CD4-positive, alpha-beta memory T cell (primary cell): ENCODE measurements at regions of chr5 and their contacts with region 1.

Region 1: DNA sequence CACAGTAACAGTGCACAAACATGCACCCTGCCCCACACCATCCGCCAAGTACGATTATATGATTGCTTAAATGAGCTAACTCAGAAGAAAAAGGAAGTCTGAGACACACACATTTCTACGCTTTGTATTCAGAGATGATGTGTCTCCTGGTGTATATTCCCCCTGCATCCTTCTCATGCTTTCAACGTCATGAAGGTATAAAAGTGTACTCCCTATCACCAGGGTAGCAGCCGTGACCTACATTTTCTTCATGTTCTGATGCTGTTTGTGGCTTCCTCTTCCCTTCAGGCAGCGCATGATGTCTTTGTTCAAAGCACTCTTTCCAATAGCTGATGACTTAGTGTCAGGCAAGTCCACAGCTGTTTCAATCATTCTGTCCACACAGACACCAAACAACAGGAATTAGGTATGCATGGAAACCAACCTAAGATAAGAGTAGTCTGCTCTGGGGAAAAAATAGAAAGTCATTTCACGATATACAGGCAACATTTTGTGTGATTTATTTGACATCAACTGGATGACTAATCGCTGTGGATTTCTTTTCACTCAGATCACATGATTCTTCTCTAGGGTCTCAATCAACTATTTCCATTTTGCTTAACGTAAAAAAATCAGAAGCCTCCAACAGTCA is 269.4 kb upstream of the PTGER4 start:
- DNase-seq: peak; percentile 88 to 97 (median 97)
- H3K4me3 ChIP-seq: peak overlapping the region in 1 of 2 donors; percentile 50
- H3K4me3 Mint-ChIP-seq: peak overlapping the region; percentile 65 to 89 (median 80)
- H3K27ac ChIP-seq: peak overlapping the region; percentile 95
- H3K27ac Mint-ChIP-seq: peak overlapping the region; percentile 86 to 100 (median 99)
- H3K4me1 ChIP-seq: peaks cover 65% of the 10 kb centered on the region
- H3K4me1 Mint-ChIP-seq: peaks cover 38 to 72% (median 52%) of the 10 kb centered on the region in 4 donors
- H3K27me3 ChIP-seq: no peaks in the 10 kb centered on the region
- H3K27me3 Mint-ChIP-seq: no peaks in the 10 kb centered on the region

Region 2: GRCh38 chr5:39765366-39765765 is 645.0 kb before region 1 on chr5:
- CTCF ChIA-PET with region 1: no interaction called
- POLR2A ChIA-PET with region 1: no interaction called
- intact Hi-C with region 1: no loop called
- DNase-seq: no peak
- H3K4me3 ChIP-seq: no peak overlapping the region
- H3K4me3 Mint-ChIP-seq: no peak overlapping the region
- H3K27ac ChIP-seq: no peak overlapping the region
- H3K27ac Mint-ChIP-seq: no peak overlapping the region
- H3K4me1 ChIP-seq: no peaks in the 10 kb centered on the region
- H3K4me1 Mint-ChIP-seq: no peaks in the 10 kb centered on the region
- H3K27me3 ChIP-seq: peaks cover 3% of the 10 kb centered on the region
- H3K27me3 Mint-ChIP-seq: peaks cover 6 to 20% of the 10 kb centered on the region in 2 donors

Region 3: DNA sequence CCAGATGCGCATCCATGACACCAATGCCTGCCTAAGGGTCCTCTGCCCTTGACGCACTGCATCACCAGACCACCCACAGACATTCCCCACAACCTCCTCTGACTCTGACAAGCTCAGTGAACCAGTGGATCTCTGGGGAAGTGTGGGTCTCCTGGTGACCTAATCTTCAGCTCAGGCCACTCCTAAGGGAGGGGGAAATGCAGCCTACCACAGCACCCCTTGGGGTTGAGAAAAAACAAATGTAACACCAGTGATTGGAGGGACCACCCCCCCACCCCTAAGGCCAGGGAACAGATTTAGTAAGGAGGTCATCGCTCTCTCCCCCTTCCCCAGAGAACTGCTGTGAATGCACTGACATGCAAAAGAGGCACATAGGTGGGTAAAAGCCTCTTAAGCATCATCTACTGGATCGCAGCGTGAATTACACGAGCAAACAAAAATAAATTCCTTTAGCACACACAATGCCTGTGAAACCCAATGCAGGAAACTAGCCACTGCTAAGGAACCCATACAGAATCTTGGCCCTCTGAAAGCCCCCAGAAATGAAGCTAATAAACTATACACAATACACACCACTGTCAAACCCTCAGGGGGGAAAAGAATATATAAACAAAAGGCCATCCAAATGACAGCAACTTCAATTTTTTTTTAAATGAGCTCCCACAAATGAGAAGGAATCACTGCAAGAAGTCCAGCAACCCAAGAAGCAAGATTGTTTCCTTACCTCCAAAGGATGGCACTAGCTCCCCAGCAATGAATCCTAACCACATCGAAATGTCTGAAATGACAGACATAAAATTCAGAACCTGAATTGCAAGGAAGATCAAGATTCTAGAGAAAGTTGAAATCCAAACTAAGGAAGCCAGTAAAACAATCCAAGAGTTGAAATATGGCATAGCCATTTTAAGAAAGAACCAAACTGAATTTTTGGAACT is 244.3 kb before region 1 on chr5:
- CTCF ChIA-PET with region 1: no interaction called
- POLR2A ChIA-PET with region 1: no interaction called
- intact Hi-C with region 1: no loop called
- DNase-seq: peak in 4 of 5 donors; percentile 13 to 33 (median 16)
- H3K4me3 ChIP-seq: no peak overlapping the region
- H3K4me3 Mint-ChIP-seq: no peak overlapping the region
- H3K27ac ChIP-seq: no peak overlapping the region
- H3K27ac Mint-ChIP-seq: no peak overlapping the region
- H3K4me1 ChIP-seq: no peaks in the 10 kb centered on the region
- H3K4me1 Mint-ChIP-seq: peaks cover 0 to 1% (median 0%) of the 10 kb centered on the region in 4 donors
- H3K27me3 ChIP-seq: no peaks in the 10 kb centered on the region
- H3K27me3 Mint-ChIP-seq: no peaks in the 10 kb centered on the region

Region 4: GRCh38 chr5:40386289-40386688 is 24.1 kb before region 1 on chr5:
- CTCF ChIA-PET with region 1: interaction called, 22 read pairs
- POLR2A ChIA-PET with region 1: interaction called, 121 read pairs
- intact Hi-C with region 1: loop called (anchors 1 kb)
- DNase-seq: peak in 4 of 5 donors; percentile 55 to 68 (median 57)
- H3K4me3 ChIP-seq: no peak overlapping the region
- H3K4me3 Mint-ChIP-seq: peak overlapping the region in 6 of 8 donors; percentile 9 to 76 (median 51)
- H3K27ac ChIP-seq: peak overlapping the region; percentile 28
- H3K27ac Mint-ChIP-seq: peak overlapping the region; percentile 70 to 96 (median 84)
- H3K4me1 ChIP-seq: peaks cover 91% of the 10 kb centered on the region
- H3K4me1 Mint-ChIP-seq: peaks cover 75 to 93% (median 82%) of the 10 kb centered on the region in 4 donors
- H3K27me3 ChIP-seq: no peaks in the 10 kb centered on the region
- H3K27me3 Mint-ChIP-seq: no peaks in the 10 kb centered on the region

Region 5: GRCh38 chr5:40391642-40392041 is 18.7 kb before region 1 on chr5:
- CTCF ChIA-PET with region 1: interaction called, 22 read pairs
- POLR2A ChIA-PET with region 1: interaction called, 121 read pairs
- intact Hi-C with region 1: loop called (anchors 1 kb)
- DNase-seq: no peak
- H3K4me3 ChIP-seq: no peak overlapping the region
- H3K4me3 Mint-ChIP-seq: peak overlapping the region in 1 of 8 donors; percentile 6
- H3K27ac ChIP-seq: no peak overlapping the region
- H3K27ac Mint-ChIP-seq: peak overlapping the region in 5 of 7 donors; percentile 17 to 79 (median 63)
- H3K4me1 ChIP-seq: peaks cover 52% of the 10 kb centered on the region
- H3K4me1 Mint-ChIP-seq: peaks cover 42 to 58% (median 46%) of the 10 kb centered on the region in 4 donors
- H3K27me3 ChIP-seq: no peaks in the 10 kb centered on the region
- H3K27me3 Mint-ChIP-seq: no peaks in the 10 kb centered on the region

Region 6: GRCh38 chr5:40428126-40428525 is 17.8 kb after region 1 on chr5:
- CTCF ChIA-PET with region 1: interaction called, 8 read pairs
- POLR2A ChIA-PET with region 1: interaction called, 43 read pairs
- intact Hi-C with region 1: no loop called
- DNase-seq: peak in 1 of 5 donors; percentile 61
- H3K4me3 ChIP-seq: no peak overlapping the region
- H3K4me3 Mint-ChIP-seq: peak overlapping the region in 1 of 8 donors; percentile 41
- H3K27ac ChIP-seq: no peak overlapping the region
- H3K27ac Mint-ChIP-seq: peak overlapping the region in 6 of 7 donors; percentile 16 to 90 (median 79)
- H3K4me1 ChIP-seq: peaks cover 26% of the 10 kb centered on the region
- H3K4me1 Mint-ChIP-seq: peaks cover 28 to 39% (median 30%) of the 10 kb centered on the region in 4 donors
- H3K27me3 ChIP-seq: no peaks in the 10 kb centered on the region
- H3K27me3 Mint-ChIP-seq: no peaks in the 10 kb centered on the region

Region 7: DNA sequence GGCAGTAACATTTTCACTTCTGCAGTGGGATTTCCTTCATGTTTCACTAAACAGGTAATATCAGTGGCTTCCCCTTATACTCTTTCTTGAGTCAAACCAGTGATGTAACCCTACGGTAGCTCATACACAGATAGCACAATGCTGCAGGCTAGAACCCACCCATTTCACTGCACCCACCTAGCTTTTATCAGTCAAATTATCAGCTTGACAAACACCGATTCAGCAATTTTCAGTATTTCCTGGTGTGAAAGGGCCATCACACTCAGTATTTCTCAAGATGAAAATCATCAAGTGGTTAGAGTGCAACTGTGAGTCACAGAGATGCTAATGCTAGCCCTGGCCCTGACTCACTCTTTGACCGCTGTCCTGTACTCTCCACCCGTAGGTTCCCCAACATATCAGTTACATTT is 27.1 kb after region 1 on chr5:
- CTCF ChIA-PET with region 1: interaction called, 111 read pairs
- POLR2A ChIA-PET with region 1: interaction called, 169 read pairs
- intact Hi-C with region 1: loop called (anchors 1 kb)
- DNase-seq: peak in 4 of 5 donors; percentile 10 to 63 (median 22)
- H3K4me3 ChIP-seq: peak overlapping the region in 1 of 2 donors; percentile 17
- H3K4me3 Mint-ChIP-seq: peak overlapping the region in 5 of 8 donors; percentile 5 to 73 (median 58)
- H3K27ac ChIP-seq: peak overlapping the region; percentile 67
- H3K27ac Mint-ChIP-seq: peak overlapping the region; percentile 82 to 97 (median 94)
- H3K4me1 ChIP-seq: peaks cover 48% of the 10 kb centered on the region
- H3K4me1 Mint-ChIP-seq: peaks cover 51 to 76% (median 63%) of the 10 kb centered on the region in 4 donors
- H3K27me3 ChIP-seq: no peaks in the 10 kb centered on the region
- H3K27me3 Mint-ChIP-seq: no peaks in the 10 kb centered on the region

Region 8: GRCh38 chr5:40486437-40487275 is 76.3 kb after region 1 on chr5:
- CTCF ChIA-PET with region 1: no interaction called
- POLR2A ChIA-PET with region 1: interaction called, 3 read pairs
- intact Hi-C with region 1: loop called (anchors 1 kb)
- DNase-seq: peak; percentile 51 to 83 (median 71)
- H3K4me3 ChIP-seq: no peak overlapping the region
- H3K4me3 Mint-ChIP-seq: peak overlapping the region in 6 of 8 donors; percentile 1 to 57 (median 22)
- H3K27ac ChIP-seq: no peak overlapping the region
- H3K27ac Mint-ChIP-seq: peak overlapping the region; percentile 31 to 94 (median 88)
- H3K4me1 ChIP-seq: peaks cover 19% of the 10 kb centered on the region
- H3K4me1 Mint-ChIP-seq: peaks cover 12 to 30% (median 20%) of the 10 kb centered on the region in 4 donors
- H3K27me3 ChIP-seq: no peaks in the 10 kb centered on the region
- H3K27me3 Mint-ChIP-seq: no peaks in the 10 kb centered on the region

Region 9: DNA sequence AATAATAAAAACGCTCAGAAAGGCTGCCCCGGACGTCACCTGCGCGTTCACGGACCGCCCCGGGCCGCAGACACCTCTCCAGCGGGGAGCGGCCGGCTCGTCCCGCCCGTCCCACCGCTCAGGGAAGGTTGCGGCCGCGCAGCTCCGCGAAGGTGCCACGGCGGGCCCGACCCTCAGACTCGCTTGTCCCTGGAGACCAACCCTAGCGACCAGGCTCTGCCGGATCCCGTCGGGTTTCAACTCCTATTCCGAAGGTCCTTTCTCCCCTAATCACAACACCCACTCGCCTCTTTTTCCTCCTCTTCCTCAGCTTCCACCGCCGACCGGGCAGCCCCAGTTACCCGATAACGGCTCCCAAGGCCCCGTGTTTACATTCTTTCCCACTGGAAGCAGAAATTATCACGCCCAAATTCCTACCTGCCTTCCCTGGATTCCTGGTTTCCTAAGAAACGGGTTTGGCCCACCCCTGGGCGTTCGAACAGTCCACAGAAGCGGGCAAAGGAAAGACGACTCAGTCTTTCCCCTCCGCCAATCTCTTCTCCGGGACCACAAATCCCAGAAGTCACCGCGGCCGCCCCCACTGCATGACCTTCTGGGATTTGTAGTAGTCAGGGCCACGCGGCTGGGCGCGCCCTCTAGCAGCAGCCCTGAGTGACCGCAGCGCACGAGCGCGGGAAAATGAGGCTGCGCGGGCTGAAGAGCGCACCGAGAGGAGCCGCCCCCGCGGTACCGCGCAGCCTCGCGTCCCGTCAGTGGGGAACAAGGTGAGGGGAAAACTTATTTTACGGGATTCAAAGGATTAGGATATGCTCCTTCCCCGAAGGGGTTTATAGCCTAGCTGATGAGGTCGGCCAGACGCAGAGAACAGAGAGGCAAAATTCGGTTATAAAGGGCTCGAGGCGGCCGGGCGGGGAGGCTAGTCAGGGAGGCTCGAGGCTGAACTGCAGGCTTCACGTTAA is 345.3 kb after region 1 on chr5 and contains the start of gene TTC33:
- CTCF ChIA-PET with region 1: no interaction called
- POLR2A ChIA-PET with region 1: interaction called, 3 read pairs
- intact Hi-C with region 1: loop called (anchors 1 kb)
- DNase-seq: peak; percentile 90 to 97 (median 92)
- H3K4me3 ChIP-seq: peak within 1 kb of the TSS; percentile 93 to 95
- H3K4me3 Mint-ChIP-seq: no peak within 1 kb of the TSS
- H3K27ac ChIP-seq: peak within 1 kb of the TSS; percentile 90
- H3K27ac Mint-ChIP-seq: peak within 1 kb of the TSS in 1 of 7 donors; percentile 68
- H3K4me1 ChIP-seq: peaks cover 21% of the 10 kb centered on the region
- H3K4me1 Mint-ChIP-seq: peaks cover 8 to 29% (median 16%) of the 10 kb centered on the region in 4 donors
- H3K27me3 ChIP-seq: no peaks in the 10 kb centered on the region
- H3K27me3 Mint-ChIP-seq: no peaks in the 10 kb centered on the region
- total RNA-seq, gene TTC33: 15.2 to 16.2 TPM